ENCODE measurements at regions of chr6 and their contacts with region 1.

Region 1: DNA sequence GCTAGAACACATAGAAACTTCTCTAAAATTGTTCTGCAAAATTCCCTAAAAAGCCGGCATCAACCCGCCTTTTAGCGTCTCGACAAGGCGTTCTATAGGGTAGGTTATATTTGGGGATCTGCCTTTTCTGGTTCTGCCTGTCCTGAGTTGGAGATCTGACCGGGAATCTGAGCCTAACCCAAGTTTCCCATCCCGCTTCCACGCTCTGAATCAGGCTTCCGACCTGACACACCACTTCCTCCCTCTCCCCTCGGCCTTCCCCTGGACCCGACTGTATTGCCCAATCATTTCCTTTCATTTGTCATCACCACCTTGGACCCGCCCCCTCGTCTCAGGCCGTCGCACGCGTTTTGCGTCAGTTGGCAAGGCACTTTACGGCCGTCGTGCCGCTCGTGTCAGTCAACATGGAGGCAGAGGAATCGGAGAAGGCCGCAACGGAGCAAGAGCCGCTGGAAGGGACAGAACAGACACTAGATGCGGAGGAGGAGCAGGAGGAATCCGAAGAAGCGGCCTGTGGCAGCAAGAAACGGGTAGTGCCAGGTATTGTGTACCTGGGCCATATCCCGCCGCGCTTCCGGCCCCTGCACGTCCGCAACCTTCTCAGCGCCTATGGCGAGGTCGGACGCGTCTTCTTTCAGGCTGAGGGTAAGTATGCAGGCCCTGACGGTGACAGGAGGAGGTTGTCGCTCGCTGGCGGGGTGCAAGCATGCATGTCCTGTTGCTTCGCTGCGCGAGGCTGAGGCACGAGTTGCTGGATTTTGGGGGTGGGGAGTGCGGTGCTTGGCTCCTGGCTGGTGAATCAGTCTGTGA is at the start of gene ABT1:
- DNase-seq: peak; percentile 96
- H3K4me3 Mint-ChIP-seq: no peak within 1 kb of the TSS
- H3K27ac Mint-ChIP-seq: no peak within 1 kb of the TSS
- H3K4me1 Mint-ChIP-seq: peaks cover 28% of the 10 kb centered on the region
- H3K27me3 Mint-ChIP-seq: peaks cover 27% of the 10 kb centered on the region
- total RNA-seq, gene ABT1: 28.2 and 29.9 TPM in 2 replicates

Region 2: GRCh38 chr6:25757936-25758642 is 838.7 kb before region 1 on chr6:
- intact Hi-C with region 1: no loop called
- DNase-seq: no peak
- H3K4me3 Mint-ChIP-seq: no peak overlapping the region
- H3K27ac Mint-ChIP-seq: no peak overlapping the region
- H3K4me1 Mint-ChIP-seq: no peaks in the 10 kb centered on the region
- H3K27me3 Mint-ChIP-seq: peaks cover 12% of the 10 kb centered on the region

Region 3: GRCh38 chr6:26175428-26176181 is 421.2 kb before region 1 on chr6:
- intact Hi-C with region 1: loop called (anchors 1 kb)
- DNase-seq: peak; percentile 52
- H3K4me3 Mint-ChIP-seq: peak overlapping the region; percentile 56
- H3K27ac Mint-ChIP-seq: peak overlapping the region; percentile 63
- H3K4me1 Mint-ChIP-seq: peaks cover 45% of the 10 kb centered on the region
- H3K27me3 Mint-ChIP-seq: no peaks in the 10 kb centered on the region

Region 4: DNA sequence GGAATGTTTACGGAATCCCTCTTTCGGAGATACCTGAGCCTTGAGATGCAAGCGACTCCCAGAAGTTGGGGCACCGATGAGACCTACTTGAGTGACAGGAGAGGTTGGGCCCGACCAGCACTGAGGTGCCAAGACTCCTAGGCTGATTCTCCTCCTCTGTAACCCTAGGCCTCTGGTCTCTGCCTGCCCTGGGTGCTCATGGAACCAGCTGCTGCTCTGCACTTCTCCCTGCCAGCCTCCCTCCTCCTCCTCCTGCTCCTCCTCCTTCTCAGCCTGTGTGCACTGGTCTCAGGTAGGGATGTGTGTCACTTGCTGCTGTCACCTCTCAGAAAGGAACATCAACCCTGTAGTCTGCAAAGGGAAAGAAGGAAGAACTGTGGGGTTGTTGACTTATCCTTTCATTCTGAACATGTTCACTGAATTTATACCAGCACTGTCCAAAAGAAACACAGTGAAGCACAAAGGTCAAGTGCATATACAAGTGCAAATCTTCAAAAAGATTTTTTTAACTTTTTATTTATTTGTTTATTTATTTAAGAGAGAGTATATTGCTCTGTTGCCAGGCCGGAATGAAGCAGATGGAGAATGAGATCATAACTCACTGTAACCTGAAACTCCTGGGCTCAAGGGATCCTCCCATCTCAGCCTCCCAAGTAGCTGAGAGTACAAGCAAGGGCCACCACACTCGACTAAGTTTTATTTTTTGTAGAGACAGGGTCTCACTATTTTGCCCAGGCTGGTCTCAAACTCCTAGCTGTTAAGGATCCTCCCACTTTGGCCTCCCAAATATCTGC is 213.0 kb before region 1 on chr6:
- intact Hi-C with region 1: no loop called
- DNase-seq: no peak
- H3K4me3 Mint-ChIP-seq: peak overlapping the region; percentile 99
- H3K27ac Mint-ChIP-seq: peak overlapping the region; percentile 98
- H3K4me1 Mint-ChIP-seq: peaks cover 27% of the 10 kb centered on the region
- H3K27me3 Mint-ChIP-seq: no peaks in the 10 kb centered on the region

Region 5: DNA sequence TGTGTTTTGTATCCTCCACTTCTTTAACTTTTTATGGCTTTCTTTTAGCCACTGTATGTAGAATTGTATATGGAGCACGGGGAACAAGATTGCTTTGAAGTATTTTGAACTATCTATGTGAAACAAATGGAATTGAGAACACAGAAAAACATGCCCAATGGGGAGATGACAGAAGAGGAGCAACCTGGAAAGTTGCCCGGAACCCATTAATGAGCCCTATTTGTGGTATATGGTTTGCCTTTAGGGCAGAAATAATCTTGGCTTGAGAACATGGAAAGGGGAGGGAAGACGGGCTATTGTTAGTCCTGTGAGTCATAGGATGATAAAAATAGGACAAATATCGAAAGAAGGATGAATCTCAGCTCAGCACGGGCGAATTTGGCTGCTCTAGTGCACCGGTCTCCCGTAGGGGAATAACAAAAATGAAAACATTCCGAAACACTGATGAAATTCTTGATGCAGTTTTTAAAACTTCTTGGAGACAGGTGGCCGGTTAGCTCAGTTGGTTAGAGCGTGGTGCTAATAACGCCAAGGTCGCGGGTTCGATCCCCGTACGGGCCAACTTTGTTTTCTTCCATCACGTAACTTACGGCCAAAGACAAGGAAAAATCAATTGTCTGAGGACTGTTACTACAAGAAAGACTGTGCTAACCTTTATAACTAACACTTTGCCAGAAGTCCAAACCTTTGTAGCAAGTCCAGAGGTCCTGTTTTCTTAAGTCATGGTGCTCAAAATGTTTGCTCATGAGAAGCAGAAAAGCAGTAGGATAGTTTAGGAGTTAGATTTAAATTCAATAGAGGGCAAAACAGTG is 42.9 kb before region 1 on chr6:
- intact Hi-C with region 1: loop called (anchors 5 kb)
- DNase-seq: peak; percentile 78
- H3K4me3 Mint-ChIP-seq: no peak overlapping the region
- H3K27ac Mint-ChIP-seq: no peak overlapping the region
- H3K4me1 Mint-ChIP-seq: peaks cover 24% of the 10 kb centered on the region
- H3K27me3 Mint-ChIP-seq: no peaks in the 10 kb centered on the region

Region 6: GRCh38 chr6:26576929-26577719 is 19.7 kb before region 1 on chr6:
- intact Hi-C with region 1: loop called (anchors 1 kb)
- DNase-seq: no peak
- H3K4me3 Mint-ChIP-seq: peak overlapping the region; percentile 78
- H3K27ac Mint-ChIP-seq: peak overlapping the region; percentile 87
- H3K4me1 Mint-ChIP-seq: peaks cover 34% of the 10 kb centered on the region
- H3K27me3 Mint-ChIP-seq: peaks cover 6% of the 10 kb centered on the region

Region 7: DNA sequence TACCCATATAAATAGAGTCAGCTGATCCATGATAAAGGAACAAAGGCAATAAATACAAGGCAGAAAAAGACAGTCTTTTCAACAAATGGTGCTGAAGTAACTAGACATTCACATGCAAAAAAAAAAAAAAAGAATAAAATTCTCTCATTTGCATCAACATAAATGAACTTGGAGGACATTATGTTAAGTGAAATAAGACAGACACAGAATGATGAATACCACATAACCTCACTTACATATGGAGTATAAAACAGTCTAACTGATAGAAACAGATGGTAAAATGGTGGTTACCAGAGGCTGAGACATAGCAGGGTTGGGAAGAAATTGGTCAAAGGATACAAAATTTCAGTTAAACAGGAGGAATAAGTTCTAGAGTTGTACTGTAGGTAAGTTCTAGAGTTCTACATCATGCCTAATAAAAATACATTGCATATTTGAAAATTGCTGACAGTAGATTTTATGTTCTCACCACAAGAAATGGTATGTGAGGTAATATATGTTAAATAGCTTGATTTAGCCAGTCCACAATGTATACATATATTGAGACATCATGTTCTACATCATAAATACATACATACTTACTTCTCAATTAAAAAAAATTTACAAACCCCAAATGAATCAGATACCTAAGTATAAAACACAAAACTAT is 54.5 kb after region 1 on chr6:
- intact Hi-C with region 1: no loop called
- DNase-seq: no peak
- H3K4me3 Mint-ChIP-seq: no peak overlapping the region
- H3K27ac Mint-ChIP-seq: no peak overlapping the region
- H3K4me1 Mint-ChIP-seq: peaks cover 2% of the 10 kb centered on the region
- H3K27me3 Mint-ChIP-seq: no peaks in the 10 kb centered on the region

Region 8: DNA sequence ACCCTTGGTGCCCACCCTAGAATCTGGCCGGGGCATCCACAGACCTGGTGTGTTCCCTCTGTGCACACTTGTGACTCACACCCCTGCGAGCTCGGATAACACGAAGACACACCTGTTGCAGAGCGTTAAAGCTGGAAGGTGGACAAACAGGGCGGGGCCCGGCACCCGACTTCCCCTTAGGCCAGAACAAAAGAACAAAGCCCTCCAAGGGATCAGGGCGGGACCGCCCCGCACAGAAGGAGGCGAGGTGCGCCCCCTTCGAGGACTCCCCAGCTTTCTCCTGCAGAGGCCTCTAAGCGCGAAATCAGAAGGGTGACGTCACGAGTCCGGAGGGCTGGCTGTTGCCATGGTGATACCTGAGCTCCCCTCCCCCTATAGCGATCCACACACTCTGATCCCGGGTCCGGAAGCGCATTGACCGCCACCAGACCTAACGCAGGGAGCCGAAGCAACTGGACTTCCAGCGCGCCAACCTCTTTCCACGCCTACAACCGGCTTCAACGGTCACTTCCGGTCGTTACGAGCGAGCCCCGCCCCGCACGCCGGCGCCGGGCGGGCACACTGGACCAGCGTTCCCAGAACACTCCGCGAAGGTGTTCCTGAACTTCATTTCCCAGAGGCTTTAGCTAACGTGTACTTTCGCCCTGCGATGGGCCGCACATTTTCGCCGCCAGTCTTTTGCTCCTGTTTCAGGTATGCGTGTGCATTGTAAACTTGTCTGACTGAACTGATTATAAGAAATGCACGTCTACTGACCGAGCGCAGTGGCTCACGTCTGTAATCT is 876.0 kb after region 1 on chr6 and contains the start of gene ZNF184:
- intact Hi-C with region 1: loop called (anchors 10 kb)
- DNase-seq: peak; percentile 87
- H3K4me3 Mint-ChIP-seq: peak within 1 kb of the TSS; percentile 92
- H3K27ac Mint-ChIP-seq: peak within 1 kb of the TSS; percentile 84
- H3K4me1 Mint-ChIP-seq: peaks cover 38% of the 10 kb centered on the region
- H3K27me3 Mint-ChIP-seq: peaks cover 3% of the 10 kb centered on the region
- total RNA-seq, gene ZNF184: 8.4 and 9.2 TPM in 2 replicates